ENCODE measurements at regions of chr17 and their contacts with region 1.

Region 1: GRCh38 chr17:7323731-7324437 is 5.3 kb downstream of the NEURL4 start:
- DNase-seq: peak in 2 of 7 donors; percentile 70 to 71
- H3K4me3 ChIP-seq: no peak overlapping the region
- H3K27ac ChIP-seq: no peak overlapping the region
- H3K4me1 ChIP-seq: peaks cover 0 to 11% of the 10 kb centered on the region in 2 donors
- H3K27me3 ChIP-seq: no peaks in the 10 kb centered on the region
- CTCF ChIP-seq: peak; percentile 62 to 79 (median 70)
- POLR2A ChIP-seq: no peak

Region 2: DNA sequence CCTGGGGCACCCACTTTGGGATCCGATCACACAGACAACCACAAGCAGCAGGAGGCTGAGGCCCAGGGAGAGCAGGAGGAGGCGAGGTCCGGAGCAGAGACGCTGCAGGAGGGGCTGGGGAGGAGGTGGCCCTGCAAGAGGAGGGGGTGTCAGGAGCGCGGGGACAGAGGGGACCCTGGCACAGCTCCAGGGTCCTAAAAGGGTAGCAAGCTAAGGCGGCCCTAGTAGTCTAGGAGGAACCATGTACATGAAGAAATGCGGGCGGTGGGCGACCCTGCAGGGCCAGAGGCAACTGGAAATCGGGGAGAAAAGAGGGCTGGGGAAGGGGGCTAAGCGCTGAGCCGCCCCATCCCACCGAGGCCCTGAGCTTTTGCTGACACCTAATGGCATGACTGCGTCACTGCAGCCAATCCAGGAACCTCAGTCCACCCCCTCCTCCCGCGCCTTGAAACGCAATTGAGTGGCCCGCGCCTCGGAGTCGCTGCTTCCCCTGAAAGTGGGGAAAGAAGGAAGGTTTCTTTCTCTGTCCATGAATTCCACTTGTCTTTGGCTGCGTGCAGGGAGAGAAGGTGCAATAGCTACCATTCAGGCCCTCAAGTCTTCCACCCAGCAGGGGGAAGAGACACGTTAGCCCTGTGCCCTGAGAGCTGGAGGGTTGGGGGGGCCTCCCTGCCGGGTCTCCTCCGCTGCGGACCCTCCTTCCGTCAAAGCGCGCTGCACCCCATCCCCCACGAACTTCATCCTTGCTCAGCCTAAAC is 146.5 kb before region 1 on chr17:
- intact Hi-C with region 1: no loop called
- DNase-seq: peak; percentile 57 to 83 (median 75)
- H3K4me3 ChIP-seq: peak overlapping the region in 1 of 4 donors; percentile 53
- H3K27ac ChIP-seq: no peak overlapping the region
- H3K4me1 ChIP-seq: peaks cover 6 to 14% of the 10 kb centered on the region in 2 donors
- H3K27me3 ChIP-seq: peaks cover 10% of the 10 kb centered on the region
- CTCF ChIP-seq: peak; percentile 49 to 81 (median 69)
- POLR2A ChIP-seq: no peak

Region 3: DNA sequence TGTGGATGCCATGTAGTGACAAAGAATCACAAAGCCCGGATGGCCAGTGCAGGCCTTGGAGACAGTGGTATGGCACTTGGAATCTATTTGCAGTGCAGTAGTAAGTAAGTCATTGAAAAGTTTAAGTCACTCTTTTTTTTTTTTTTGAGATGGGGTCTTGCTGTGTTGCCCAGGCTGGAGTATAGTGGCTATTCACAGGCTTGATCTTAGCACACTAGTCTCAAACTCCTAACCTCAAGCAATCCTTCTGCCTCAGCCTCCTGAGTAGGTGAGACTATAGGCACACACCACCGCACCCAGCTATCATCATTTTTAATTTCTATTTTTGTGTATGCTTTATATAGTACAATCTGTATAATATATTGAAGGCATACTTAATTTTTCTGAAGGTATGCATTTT is 74.7 kb after region 1 on chr17:
- intact Hi-C with region 1: loop called in 1 of 2 experiments (anchors 2 kb)
- DNase-seq: no peak
- H3K4me3 ChIP-seq: no peak overlapping the region
- H3K27ac ChIP-seq: no peak overlapping the region
- H3K4me1 ChIP-seq: peaks cover 13 to 19% of the 10 kb centered on the region in 2 donors
- H3K27me3 ChIP-seq: no peaks in the 10 kb centered on the region
- CTCF ChIP-seq: no peak
- POLR2A ChIP-seq: no peak

Region 4: GRCh38 chr17:7484067-7484918 is 160.4 kb after region 1 on chr17 and contains the start of gene POLR2A:
- intact Hi-C with region 1: no loop called
- DNase-seq: peak; percentile 98 to 99 (median 99)
- H3K4me3 ChIP-seq: peak within 1 kb of the TSS in 3 of 4 donors; percentile 44 to 68 (median 65)
- H3K27ac ChIP-seq: peak within 1 kb of the TSS; percentile 95 to 100 (median 99)
- H3K4me1 ChIP-seq: peaks cover 37 to 43% of the 10 kb centered on the region in 2 donors
- H3K27me3 ChIP-seq: no peaks in the 10 kb centered on the region
- CTCF ChIP-seq: peak in 1 of 6 experiments; percentile 1
- POLR2A ChIP-seq: peak; percentile 100
- total RNA-seq, gene POLR2A: 34.9 to 172 (median 117) TPM